ENCODE measurements at regions of chr2 and their contacts with region 1.

Region 1: GRCh38 chr2:218269899-218270720 is at the starts of genes AAMP and PNKD:
- DNase-seq: peak; percentile 100
- ATAC-seq: peak; percentile 89
- H3K4me3 ChIP-seq: peak within 1 kb of the TSS; percentile 82 to 95
- H3K4me3 Mint-ChIP-seq: peak within 1 kb of the TSS; percentile 92
- H3K27ac ChIP-seq: peak within 1 kb of the TSS; percentile 81 to 82
- H3K27ac Mint-ChIP-seq: peak within 1 kb of the TSS; percentile 92
- H3K4me1 ChIP-seq: peaks cover 31% of the 10 kb centered on the region
- H3K4me1 Mint-ChIP-seq: peaks cover 50% of the 10 kb centered on the region
- H3K27me3 ChIP-seq: no peaks in the 10 kb centered on the region
- H3K27me3 Mint-ChIP-seq: no peaks in the 10 kb centered on the region
- CTCF ChIP-seq: no peak
- total RNA-seq, gene AAMP: 44.7 to 50.4 TPM
- total RNA-seq, gene PNKD: 7.1 to 7.2 TPM

Region 2: DNA sequence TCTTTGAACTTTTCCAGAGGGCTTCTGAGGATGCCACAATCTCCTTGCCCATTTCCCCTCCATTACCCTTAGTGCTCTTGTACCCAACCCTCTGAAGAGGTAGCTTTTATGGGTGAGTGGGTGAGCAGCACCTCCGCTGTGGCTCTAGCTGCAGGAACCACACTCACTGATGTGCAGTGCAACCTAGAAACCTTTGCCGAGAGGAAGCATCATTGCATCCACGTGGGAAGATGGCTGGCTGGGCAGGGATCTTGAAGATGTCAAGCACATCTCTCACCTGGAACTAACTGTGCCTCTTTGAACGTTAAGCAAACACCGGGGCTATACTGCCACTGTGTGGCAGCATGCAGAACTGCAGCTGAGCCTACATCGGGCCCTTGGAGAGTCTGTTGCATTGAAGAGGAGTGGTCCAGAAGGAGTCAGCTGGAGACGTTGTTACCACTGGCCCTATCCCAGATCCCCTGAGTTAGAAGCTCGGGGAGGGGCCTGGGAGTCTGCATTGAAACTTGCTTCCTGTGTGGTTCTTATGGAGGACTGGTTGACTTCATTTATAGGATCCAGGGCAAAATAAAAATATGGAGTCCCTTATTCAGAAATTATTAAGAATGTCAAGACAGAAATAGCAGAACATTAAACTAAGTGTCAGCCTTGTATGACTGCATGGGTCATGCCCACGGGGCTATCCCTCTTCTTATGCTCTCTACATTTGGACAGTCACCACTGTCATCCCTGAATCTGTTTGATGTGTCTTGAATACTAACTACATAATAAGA is 1603.5 kb before region 1 on chr2:
- CTCF ChIA-PET with region 1: no interaction called
- POLR2A ChIA-PET with region 1: no interaction called
- intact Hi-C with region 1: no loop called
- DNase-seq: peak; percentile 46 to 79 (median 66)
- ATAC-seq: peak; percentile 97
- H3K4me3 ChIP-seq: no peak overlapping the region
- H3K4me3 Mint-ChIP-seq: no peak overlapping the region
- H3K27ac ChIP-seq: no peak overlapping the region
- H3K27ac Mint-ChIP-seq: no peak overlapping the region
- H3K4me1 ChIP-seq: no peaks in the 10 kb centered on the region
- H3K4me1 Mint-ChIP-seq: no peaks in the 10 kb centered on the region
- H3K27me3 ChIP-seq: peaks cover 0 to 2% of the 10 kb centered on the region in 2 experiments
- H3K27me3 Mint-ChIP-seq: peaks cover 18% of the 10 kb centered on the region
- CTCF ChIP-seq: peak; percentile 98

Region 3: DNA sequence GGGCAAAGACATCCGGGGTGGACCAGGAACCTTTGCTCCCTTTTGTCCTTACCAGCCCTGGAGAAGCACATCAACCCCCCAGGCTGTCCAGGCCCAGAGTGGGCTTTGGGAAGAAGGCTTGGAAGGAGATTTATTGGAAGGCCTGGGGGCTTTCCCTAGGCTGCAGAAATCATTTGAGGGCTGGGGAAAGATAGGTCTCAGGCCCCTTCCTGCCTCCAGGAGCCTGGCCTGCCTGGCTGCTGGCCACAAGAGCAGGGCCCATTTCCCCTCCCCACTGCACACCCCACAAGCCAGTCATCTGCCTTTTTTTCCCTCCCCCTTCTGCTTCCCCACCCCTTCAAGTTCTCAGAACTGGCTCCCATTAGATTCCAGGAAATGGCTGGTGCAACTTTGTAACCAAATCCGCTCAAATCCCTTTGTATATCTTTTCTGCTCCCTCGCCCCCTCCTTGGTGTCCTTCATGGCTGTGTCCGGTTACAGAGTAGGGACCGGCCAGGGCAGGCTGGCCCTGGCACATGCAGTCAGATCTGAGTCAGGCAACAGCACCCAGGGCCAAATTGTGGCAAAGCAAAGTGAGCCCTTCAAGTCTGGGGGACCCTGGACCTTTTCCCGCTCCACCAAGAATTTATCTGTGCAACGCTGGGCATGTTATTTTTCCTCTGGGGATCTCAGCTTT is 1389.5 kb before region 1 on chr2:
- CTCF ChIA-PET with region 1: no interaction called
- POLR2A ChIA-PET with region 1: no interaction called
- intact Hi-C with region 1: no loop called
- DNase-seq: no peak
- ATAC-seq: no peak
- H3K4me3 ChIP-seq: no peak overlapping the region
- H3K4me3 Mint-ChIP-seq: no peak overlapping the region
- H3K27ac ChIP-seq: no peak overlapping the region
- H3K27ac Mint-ChIP-seq: no peak overlapping the region
- H3K4me1 ChIP-seq: peaks cover 17% of the 10 kb centered on the region
- H3K4me1 Mint-ChIP-seq: peaks cover 14% of the 10 kb centered on the region
- H3K27me3 ChIP-seq: no peaks in the 10 kb centered on the region
- H3K27me3 Mint-ChIP-seq: no peaks in the 10 kb centered on the region
- CTCF ChIP-seq: no peak

Region 4: GRCh38 chr2:218216674-218217359 is 53.3 kb before region 1 on chr2 and contains the start of gene ARPC2:
- CTCF ChIA-PET with region 1: interaction called, 7 read pairs
- POLR2A ChIA-PET with region 1: interaction called, 20 read pairs
- intact Hi-C with region 1: loop called (anchors 1 kb)
- DNase-seq: peak; percentile 90 to 98 (median 95)
- ATAC-seq: peak; percentile 78
- H3K4me3 ChIP-seq: peak within 1 kb of the TSS; percentile 91 to 97
- H3K4me3 Mint-ChIP-seq: peak within 1 kb of the TSS; percentile 91
- H3K27ac ChIP-seq: peak within 1 kb of the TSS; percentile 87 to 99
- H3K27ac Mint-ChIP-seq: peak within 1 kb of the TSS; percentile 97
- H3K4me1 ChIP-seq: peaks cover 36% of the 10 kb centered on the region
- H3K4me1 Mint-ChIP-seq: peaks cover 45% of the 10 kb centered on the region
- H3K27me3 ChIP-seq: no peaks in the 10 kb centered on the region
- H3K27me3 Mint-ChIP-seq: no peaks in the 10 kb centered on the region
- CTCF ChIP-seq: no peak
- total RNA-seq, gene ARPC2: 521 to 547 TPM

Region 5: DNA sequence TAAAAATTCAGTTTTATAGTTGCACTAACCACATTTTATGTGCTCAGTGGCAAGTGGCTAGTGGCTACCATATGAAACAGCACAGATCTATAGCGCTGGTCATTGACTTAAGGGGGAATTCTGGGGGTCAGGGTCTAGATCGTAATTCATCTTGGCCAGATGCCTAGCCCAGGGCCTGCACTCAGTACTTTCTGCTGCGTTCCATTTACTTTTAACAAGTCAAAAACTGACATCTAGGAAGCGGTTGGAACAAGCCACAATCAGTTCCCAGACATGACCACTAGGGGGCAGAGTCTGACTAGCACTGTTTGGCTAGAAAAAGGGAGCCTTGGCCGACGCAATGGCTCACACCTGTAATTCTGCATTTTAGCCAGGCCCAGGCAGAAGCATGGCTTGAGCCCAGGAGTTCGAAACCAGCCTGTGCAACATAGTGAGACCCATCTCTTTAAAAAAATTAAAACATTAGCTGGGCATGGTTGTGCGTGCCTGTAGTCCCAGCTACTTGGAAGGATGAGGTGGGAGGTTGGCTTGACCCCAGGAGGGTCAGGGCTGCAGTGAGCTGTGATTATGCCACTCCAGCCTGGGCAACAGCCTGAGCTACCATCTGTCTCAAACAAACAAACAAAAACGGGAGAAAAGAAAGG is 31.2 kb after region 1 on chr2:
- CTCF ChIA-PET with region 1: interaction called, 340 read pairs
- POLR2A ChIA-PET with region 1: no interaction called
- intact Hi-C with region 1: loop called in 1 of 2 experiments (anchors 1 kb)
- DNase-seq: peak; percentile 78 to 93 (median 89)
- ATAC-seq: peak; percentile 98
- H3K4me3 ChIP-seq: no peak overlapping the region
- H3K4me3 Mint-ChIP-seq: no peak overlapping the region
- H3K27ac ChIP-seq: no peak overlapping the region
- H3K27ac Mint-ChIP-seq: no peak overlapping the region
- H3K4me1 ChIP-seq: no peaks in the 10 kb centered on the region
- H3K4me1 Mint-ChIP-seq: peaks cover 6% of the 10 kb centered on the region
- H3K27me3 ChIP-seq: no peaks in the 10 kb centered on the region
- H3K27me3 Mint-ChIP-seq: no peaks in the 10 kb centered on the region
- CTCF ChIP-seq: peak; percentile 83

Region 6: DNA sequence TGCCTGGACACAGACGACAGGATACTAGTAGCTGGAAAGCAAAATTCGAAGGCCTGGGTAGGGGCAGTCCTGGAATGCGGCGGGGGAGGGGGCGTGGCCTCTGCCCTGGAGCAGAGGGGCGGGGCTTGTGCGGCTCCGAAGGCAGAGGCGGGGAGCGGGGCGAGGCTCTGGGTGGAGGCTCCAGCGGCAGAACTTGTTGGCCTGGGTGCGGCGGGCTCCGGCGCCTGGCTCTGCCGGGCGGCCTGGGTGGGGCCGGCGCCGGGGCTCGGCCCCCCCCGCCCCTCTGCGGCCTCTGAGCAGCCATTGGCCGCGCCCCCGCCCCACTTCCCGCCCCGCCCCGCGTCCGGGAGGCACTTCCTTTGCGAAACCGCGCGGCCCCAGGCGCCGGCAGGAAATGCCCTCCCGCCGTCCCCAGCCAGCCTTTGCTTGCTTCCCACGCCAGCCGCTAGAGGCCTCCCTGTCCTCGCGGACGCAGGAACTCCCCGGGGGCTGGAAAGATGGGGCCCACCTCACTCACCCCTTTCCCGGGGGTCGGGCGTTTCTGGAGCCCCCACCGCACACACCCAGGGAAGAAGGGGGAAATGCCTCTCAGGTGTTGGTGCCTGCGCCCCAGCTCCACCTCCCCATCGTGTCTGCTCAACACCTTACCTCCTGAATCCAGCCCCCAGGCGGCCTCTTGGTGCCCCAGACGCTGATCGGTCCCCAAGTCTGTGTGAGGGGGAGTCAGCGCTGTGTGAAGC is 136.3 kb after region 1 on chr2:
- CTCF ChIA-PET with region 1: no interaction called
- POLR2A ChIA-PET with region 1: interaction called, 4 read pairs
- intact Hi-C with region 1: loop called in 1 of 2 experiments (anchors 1 kb)
- DNase-seq: peak; percentile 79 to 98 (median 95)
- ATAC-seq: peak; percentile 68
- H3K4me3 ChIP-seq: peak overlapping the region; percentile 52 to 63
- H3K4me3 Mint-ChIP-seq: peak overlapping the region; percentile 82
- H3K27ac ChIP-seq: peak overlapping the region; percentile 56 to 73
- H3K27ac Mint-ChIP-seq: peak overlapping the region; percentile 94
- H3K4me1 ChIP-seq: peaks cover 49% of the 10 kb centered on the region
- H3K4me1 Mint-ChIP-seq: peaks cover 56% of the 10 kb centered on the region
- H3K27me3 ChIP-seq: no peaks in the 10 kb centered on the region
- H3K27me3 Mint-ChIP-seq: peaks cover 2% of the 10 kb centered on the region
- CTCF ChIP-seq: peak; percentile 59

Region 7: GRCh38 chr2:218710687-218711549 is 440.8 kb after region 1 on chr2 and contains the start of gene TTLL4:
- CTCF ChIA-PET with region 1: no interaction called
- POLR2A ChIA-PET with region 1: interaction called, 3 read pairs
- intact Hi-C with region 1: loop called (anchors 1 kb)
- DNase-seq: peak; percentile 97 to 99 (median 99)
- ATAC-seq: peak; percentile 99
- H3K4me3 ChIP-seq: peak within 1 kb of the TSS; percentile 86 to 92
- H3K4me3 Mint-ChIP-seq: peak within 1 kb of the TSS; percentile 91
- H3K27ac ChIP-seq: peak within 1 kb of the TSS; percentile 73 to 90
- H3K27ac Mint-ChIP-seq: peak within 1 kb of the TSS; percentile 84
- H3K4me1 ChIP-seq: peaks cover 13% of the 10 kb centered on the region
- H3K4me1 Mint-ChIP-seq: peaks cover 19% of the 10 kb centered on the region
- H3K27me3 ChIP-seq: no peaks in the 10 kb centered on the region
- H3K27me3 Mint-ChIP-seq: peaks cover 6% of the 10 kb centered on the region
- CTCF ChIP-seq: peak; percentile 76
- total RNA-seq, gene TTLL4: 6.9 to 8.1 TPM

Region 8: DNA sequence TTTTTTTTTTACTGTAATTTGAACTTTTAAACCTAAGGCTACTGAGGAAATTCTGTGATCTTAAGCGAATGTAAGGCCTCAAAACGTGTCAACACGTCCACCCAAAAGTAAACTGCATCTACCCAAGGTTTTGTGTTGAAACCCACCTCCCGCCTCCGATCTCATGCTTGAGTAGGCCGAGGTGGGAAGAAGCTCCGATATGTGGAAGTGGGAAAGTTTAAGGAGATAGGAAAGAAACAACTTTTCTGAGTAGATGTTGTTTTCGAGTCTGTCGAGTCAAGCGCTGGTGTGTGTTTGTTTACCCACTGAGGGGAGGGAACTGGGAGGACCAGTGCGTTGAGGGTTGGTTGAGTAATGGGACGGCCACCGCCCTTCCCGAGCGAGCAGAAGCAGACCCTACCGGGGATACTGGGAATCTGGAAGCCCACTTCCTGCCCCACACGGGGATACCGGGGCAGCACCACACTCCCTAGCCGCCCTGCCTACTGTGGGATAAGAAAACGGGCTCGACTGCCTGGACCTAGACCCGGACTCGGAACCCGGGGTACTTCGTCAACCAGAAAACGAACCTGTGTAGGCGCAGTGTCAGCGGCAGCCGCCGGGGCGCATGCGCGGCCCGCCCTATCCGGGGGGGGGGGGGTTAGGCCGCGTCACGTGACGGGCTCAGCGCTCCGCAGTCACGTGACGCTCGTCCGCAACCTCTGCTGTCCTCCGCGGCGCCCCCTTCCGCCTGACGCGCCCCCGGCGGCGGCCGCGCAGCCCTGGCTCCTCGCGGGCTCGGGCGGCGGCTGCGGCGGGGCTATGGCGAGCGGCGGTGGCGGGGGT is 907.7 kb after region 1 on chr2 and contains the start of gene RETREG2:
- CTCF ChIA-PET with region 1: no interaction called
- POLR2A ChIA-PET with region 1: no interaction called
- intact Hi-C with region 1: loop called in 1 of 2 experiments (anchors 5 kb)
- DNase-seq: peak; percentile 61 to 96 (median 78)
- ATAC-seq: peak; percentile 55
- H3K4me3 ChIP-seq: peak within 1 kb of the TSS; percentile 71 to 82
- H3K4me3 Mint-ChIP-seq: peak within 1 kb of the TSS; percentile 91
- H3K27ac ChIP-seq: peak within 1 kb of the TSS; percentile 97 to 98
- H3K27ac Mint-ChIP-seq: peak within 1 kb of the TSS; percentile 99
- H3K4me1 ChIP-seq: peaks cover 75% of the 10 kb centered on the region
- H3K4me1 Mint-ChIP-seq: peaks cover 75% of the 10 kb centered on the region
- H3K27me3 ChIP-seq: no peaks in the 10 kb centered on the region
- H3K27me3 Mint-ChIP-seq: no peaks in the 10 kb centered on the region
- CTCF ChIP-seq: no peak
- total RNA-seq, gene RETREG2: 76.7 to 79.0 TPM

Measured in CD8-positive, alpha-beta T cell (primary cell).